MCF 10A (cell line): ENCODE measurements at regions of chr10 and their contacts with region 1.

Region 1: GRCh38 chr10:125263555-125263954 is 103.2 kb upstream of the CTBP2 start:
- DNase-seq: peak; percentile 79
- H3K4me3 Mint-ChIP-seq: no peak overlapping the region
- H3K27ac Mint-ChIP-seq: no peak overlapping the region
- H3K4me1 Mint-ChIP-seq: peaks cover 30% of the 10 kb centered on the region
- H3K27me3 Mint-ChIP-seq: no peaks in the 10 kb centered on the region
- CTCF ChIP-seq: no peak

Region 2: GRCh38 chr10:124946945-124947344 is 316.6 kb before region 1 on chr10:
- CTCF ChIA-PET with region 1: no interaction called
- POLR2A ChIA-PET with region 1: no interaction called
- intact Hi-C with region 1: no loop called
- DNase-seq: no peak
- H3K4me3 Mint-ChIP-seq: no peak overlapping the region
- H3K27ac Mint-ChIP-seq: peak overlapping the region; percentile 1
- H3K4me1 Mint-ChIP-seq: peaks cover 45% of the 10 kb centered on the region
- H3K27me3 Mint-ChIP-seq: no peaks in the 10 kb centered on the region
- CTCF ChIP-seq: no peak

Region 3: GRCh38 chr10:124975977-124976514 is 287.5 kb before region 1 on chr10:
- CTCF ChIA-PET with region 1: no interaction called
- POLR2A ChIA-PET with region 1: no interaction called
- intact Hi-C with region 1: no loop called
- DNase-seq: no peak
- H3K4me3 Mint-ChIP-seq: no peak overlapping the region
- H3K27ac Mint-ChIP-seq: peak overlapping the region; percentile 12
- H3K4me1 Mint-ChIP-seq: peaks cover 6% of the 10 kb centered on the region
- H3K27me3 Mint-ChIP-seq: no peaks in the 10 kb centered on the region
- CTCF ChIP-seq: no peak

Region 4: DNA sequence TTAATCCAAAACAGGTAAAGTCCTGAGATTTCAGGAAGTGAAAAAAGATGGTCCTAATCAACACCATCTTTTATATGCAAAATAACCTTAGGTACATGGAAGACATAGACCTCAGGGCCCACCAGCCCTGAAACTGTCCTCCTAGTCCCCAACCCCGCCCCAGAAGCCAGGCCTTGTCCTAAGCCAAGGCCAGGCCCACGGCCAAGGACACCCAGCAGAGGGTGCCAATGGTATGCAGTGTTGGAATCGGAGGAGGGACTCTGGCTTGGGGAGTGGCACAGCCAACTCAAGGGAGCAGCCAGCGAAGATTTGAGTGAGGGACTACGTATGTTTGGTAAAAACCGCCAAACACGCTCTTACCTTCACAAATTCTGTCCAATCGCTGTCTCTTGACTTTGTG is 224.9 kb before region 1 on chr10:
- CTCF ChIA-PET with region 1: no interaction called
- POLR2A ChIA-PET with region 1: no interaction called
- intact Hi-C with region 1: no loop called
- DNase-seq: peak; percentile 71
- H3K4me3 Mint-ChIP-seq: no peak overlapping the region
- H3K27ac Mint-ChIP-seq: peak overlapping the region; percentile 91
- H3K4me1 Mint-ChIP-seq: peaks cover 41% of the 10 kb centered on the region
- H3K27me3 Mint-ChIP-seq: no peaks in the 10 kb centered on the region
- CTCF ChIP-seq: peak; percentile 12

Region 5: DNA sequence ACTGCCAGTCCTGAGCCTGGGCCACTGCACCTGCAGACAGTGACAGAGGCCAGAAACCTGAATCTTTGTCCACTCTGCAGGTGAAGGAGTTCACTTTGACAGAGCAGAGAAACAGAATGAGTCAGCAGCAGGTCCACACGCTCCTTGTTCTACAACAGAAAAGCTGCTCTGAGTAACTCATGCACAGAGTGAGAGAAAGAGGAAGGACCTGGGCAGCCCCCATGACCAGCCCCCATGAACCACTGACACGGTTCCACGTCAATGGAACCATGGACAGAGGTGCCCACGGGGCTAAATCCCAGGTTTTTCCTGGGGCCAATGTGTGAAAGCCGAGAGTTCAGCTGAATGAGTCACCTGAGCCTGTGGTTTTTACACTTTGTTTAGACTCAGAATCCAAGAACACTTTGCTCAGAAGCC is 62.4 kb before region 1 on chr10:
- CTCF ChIA-PET with region 1: no interaction called
- POLR2A ChIA-PET with region 1: no interaction called
- intact Hi-C with region 1: loop called (anchors 2 kb)
- DNase-seq: peak; percentile 79
- H3K4me3 Mint-ChIP-seq: peak overlapping the region; percentile 36
- H3K27ac Mint-ChIP-seq: peak overlapping the region; percentile 80
- H3K4me1 Mint-ChIP-seq: peaks cover 16% of the 10 kb centered on the region
- H3K27me3 Mint-ChIP-seq: no peaks in the 10 kb centered on the region
- CTCF ChIP-seq: no peak